Activated naive CD4-positive, alpha-beta T cell treated with anti-CD3 and anti-CD28 coated beads for 36 hours (primary cell): ENCODE measurements at regions of chrX and their contacts with region 1.

Region 1: DNA sequence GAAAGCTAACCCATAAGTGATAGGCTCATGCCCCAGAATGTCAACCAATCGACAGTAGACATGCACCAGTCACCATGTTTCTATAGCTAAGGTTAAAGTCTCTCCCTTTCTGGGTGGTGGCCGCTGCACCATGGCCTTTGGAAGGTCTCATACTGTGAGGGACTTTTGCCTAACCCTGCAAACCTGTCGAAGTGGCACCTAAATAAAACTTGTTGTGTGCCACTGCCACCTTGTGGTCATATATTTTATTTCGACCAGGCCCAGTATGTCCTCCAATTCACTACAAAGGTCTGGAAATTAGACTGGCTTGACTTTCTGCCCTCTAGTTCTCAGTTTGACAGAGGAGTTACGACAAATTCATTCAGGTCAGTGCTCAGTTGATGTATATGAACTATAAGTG is 163.1 kb downstream of the SMARCA1 start:
- DNase-seq: peak; percentile 55
- H3K4me3 Mint-ChIP-seq: no peak overlapping the region
- H3K27ac Mint-ChIP-seq: no peak overlapping the region
- H3K4me1 Mint-ChIP-seq: no peaks in the 10 kb centered on the region
- H3K27me3 Mint-ChIP-seq: no peaks in the 10 kb centered on the region

Region 2: DNA sequence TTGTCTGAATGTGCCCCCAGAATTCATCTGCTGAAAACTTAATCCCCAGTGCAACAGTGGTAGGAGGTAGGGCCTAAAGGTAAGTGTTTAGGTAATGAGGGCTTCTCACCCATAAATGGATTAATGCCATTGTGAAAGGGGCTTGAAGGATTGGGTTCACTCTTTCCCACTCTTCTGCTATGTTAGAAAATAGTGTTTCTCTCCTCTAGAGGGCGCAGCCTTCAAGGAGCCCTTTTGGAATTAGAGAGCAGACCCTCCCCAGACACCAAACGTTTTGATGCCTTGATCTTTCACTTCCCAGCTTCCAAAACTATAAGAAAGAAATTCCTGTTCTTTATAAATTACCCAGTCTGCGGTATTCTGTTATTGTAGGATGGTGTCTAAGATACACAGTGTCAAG is 543.3 kb before region 1 on chrX:
- CTCF ChIA-PET with region 1: no interaction called
- intact Hi-C with region 1: loop called (anchors 5 kb)
- DNase-seq: no peak
- H3K4me3 Mint-ChIP-seq: no peak overlapping the region
- H3K27ac Mint-ChIP-seq: no peak overlapping the region
- H3K4me1 Mint-ChIP-seq: no peaks in the 10 kb centered on the region
- H3K27me3 Mint-ChIP-seq: no peaks in the 10 kb centered on the region

Region 3: GRCh38 chrX:128992107-128992971 is 367.8 kb before region 1 on chrX:
- CTCF ChIA-PET with region 1: no interaction called
- intact Hi-C with region 1: no loop called
- DNase-seq: no peak
- H3K4me3 Mint-ChIP-seq: no peak overlapping the region
- H3K27ac Mint-ChIP-seq: no peak overlapping the region
- H3K4me1 Mint-ChIP-seq: no peaks in the 10 kb centered on the region
- H3K27me3 Mint-ChIP-seq: no peaks in the 10 kb centered on the region

Region 4: DNA sequence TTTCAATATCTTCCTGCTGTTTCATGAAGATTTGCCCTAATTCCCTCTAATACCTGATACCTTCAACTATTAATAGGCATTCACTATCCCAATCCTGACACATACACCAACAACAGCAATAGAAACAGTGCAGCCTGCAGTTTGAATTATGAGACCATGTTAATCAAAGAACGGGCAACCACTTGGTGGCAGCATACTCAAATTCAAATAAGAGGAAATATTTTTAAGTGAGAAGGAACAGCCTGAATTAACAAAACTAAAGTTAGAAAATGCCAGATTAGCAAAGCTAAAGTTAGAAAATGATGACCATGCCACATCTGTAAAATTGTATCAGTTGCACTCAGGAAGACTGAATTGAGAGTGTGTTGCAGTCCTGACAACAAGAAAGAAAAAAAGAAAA is 41.8 kb before region 1 on chrX:
- CTCF ChIA-PET with region 1: interaction called, 4 read pairs
- intact Hi-C with region 1: loop called (anchors 1 kb)
- DNase-seq: peak; percentile 31
- H3K4me3 Mint-ChIP-seq: no peak overlapping the region
- H3K27ac Mint-ChIP-seq: no peak overlapping the region
- H3K4me1 Mint-ChIP-seq: no peaks in the 10 kb centered on the region
- H3K27me3 Mint-ChIP-seq: no peaks in the 10 kb centered on the region

Region 5: GRCh38 chrX:129462707-129463106 is 102.5 kb after region 1 on chrX:
- CTCF ChIA-PET with region 1: no interaction called
- intact Hi-C with region 1: loop called (anchors 5 kb)
- DNase-seq: no peak
- H3K4me3 Mint-ChIP-seq: no peak overlapping the region
- H3K27ac Mint-ChIP-seq: no peak overlapping the region
- H3K4me1 Mint-ChIP-seq: no peaks in the 10 kb centered on the region
- H3K27me3 Mint-ChIP-seq: no peaks in the 10 kb centered on the region